ENCODE measurements at regions of chr16 and their contacts with region 1.

Region 1: DNA sequence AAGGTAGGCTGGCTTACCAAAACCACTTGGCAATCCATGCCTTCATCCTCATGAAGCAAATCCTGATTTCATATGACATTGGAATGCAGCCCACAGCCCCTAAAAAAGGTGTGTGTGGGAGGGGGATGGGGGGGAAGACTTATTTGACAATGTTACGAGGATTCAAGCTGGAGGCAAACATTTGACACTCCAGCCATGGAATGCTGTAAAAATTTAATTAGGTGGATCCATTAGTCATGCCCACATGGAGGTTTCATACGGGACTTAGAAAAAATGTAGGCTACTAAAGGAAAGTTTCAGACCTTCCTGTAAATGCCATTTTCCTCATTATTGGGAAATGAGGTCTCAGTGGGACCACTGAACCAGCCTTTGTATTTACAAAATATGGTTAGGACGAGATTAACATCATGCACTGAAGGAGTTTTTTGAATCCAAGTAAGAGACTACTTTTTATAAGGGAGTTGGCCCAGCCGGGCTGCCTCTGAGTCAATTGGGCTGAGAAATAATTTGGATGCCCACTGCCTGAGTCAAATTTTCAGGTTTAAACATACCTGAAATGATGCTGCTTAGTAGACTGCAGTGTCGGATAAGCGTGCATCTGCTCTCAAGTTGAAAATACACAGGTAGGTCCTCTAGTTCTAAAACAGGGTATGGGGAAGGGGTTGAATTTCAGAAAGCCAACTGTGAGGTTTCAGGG is 44.6 kb upstream of the MAF start:
- DNase-seq: no peak

Region 2: DNA sequence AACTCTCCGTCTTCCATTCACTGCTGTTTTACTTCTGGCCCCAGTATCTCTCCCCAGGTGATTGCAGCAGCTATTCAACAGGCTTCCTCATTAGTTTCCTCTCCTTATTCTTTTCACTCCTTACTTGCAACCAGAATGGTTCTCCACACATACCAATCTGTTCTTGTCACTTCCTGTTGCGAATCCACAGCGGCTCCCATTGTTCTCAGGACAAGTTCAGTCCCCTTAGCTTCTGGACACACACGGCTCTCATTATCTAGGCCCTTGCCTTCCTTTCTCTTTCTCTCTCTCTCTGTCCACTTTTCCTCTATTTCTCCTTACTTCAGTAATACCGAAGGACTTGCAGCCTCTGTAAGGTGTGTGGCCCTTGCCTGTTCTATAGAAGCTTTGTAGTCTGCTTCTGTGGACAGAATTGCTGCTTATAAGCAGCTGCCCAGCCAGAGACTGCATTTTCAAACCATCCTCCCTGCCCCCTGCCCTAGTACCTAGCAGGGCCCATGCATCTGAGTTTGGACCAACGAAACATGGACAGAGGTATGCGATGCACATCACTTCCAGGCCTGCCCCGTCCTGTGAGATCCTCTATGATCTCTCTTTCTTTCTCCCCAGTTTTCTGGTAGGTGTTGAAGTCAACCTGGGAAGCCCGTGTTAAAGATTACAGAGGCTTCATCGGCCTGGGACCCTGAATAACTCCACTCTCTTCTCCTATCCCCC is 1811.0 kb before region 1 on chr16:
- intact Hi-C with region 1: loop called in 1 of 2 experiments (anchors 5 kb)
- DNase-seq: no peak

Measured in posterior vena cava (tissue), 2 donors.